Common myeloid progenitor, CD34-positive (primary cell): ENCODE measurements at regions of chr16 and their contacts with region 1.

Region 1: GRCh38 chr16:57675741-57676584 is 7.9 kb downstream of the ADGRG3 start:
- DNase-seq: peak in 2 of 3 donors; percentile 74 to 78
- H3K4me3 ChIP-seq: peak overlapping the region in 1 of 7 experiments; percentile 7
- H3K27ac ChIP-seq: peak overlapping the region in 1 of 2 experiments; percentile 31
- H3K4me1 ChIP-seq: peaks cover 3 to 59% (median 53%) of the 10 kb centered on the region in 4 experiments
- H3K27me3 ChIP-seq: no peaks in the 10 kb centered on the region

Region 2: GRCh38 chr16:57564571-57565270 is 111.2 kb before region 1 on chr16:
- CTCF ChIA-PET with region 1: no interaction called
- POLR2A ChIA-PET with region 1: no interaction called
- DNase-seq: no peak
- H3K4me3 ChIP-seq: no peak overlapping the region
- H3K27ac ChIP-seq: no peak overlapping the region
- H3K4me1 ChIP-seq: no peaks in the 10 kb centered on the region
- H3K27me3 ChIP-seq: no peaks in the 10 kb centered on the region

Region 3: DNA sequence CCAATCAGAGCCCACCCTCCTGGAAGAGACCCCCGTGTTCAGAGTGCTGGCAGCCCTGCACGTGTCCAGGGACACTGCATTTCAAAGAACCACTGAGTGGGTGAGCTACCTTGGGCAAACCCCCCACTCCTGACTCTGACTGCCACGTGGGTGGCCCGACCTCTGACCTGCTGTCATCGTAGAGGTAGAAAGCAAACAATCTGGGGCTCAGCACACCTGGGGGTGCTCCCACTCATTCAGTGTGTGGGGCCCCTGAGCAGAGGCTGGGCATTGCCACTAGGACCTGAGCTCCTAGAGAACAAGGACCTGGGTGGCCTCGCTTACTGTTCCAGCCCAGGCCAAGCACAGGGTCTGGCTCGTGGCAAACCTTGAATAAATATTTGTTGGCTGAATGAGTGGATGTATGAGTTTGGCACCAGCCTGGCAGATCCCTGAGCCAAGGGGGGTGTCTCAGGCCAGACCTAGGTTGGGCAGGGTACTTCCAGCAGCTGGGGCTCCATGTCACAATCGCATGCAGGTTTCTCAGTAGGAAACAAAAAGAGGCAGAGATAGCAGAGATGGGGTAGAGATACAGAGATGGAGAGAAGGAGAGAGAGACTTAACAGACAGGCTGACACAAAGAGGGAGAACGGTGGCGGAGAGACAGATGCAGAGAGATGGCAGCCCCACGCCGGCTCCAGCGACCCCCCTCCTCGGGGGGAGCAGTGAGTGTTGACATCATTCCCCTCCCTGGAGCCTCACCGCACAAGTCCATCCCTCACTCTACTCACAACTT is 13.2 kb after region 1 on chr16:
- CTCF ChIA-PET with region 1: interaction called, 16 read pairs
- POLR2A ChIA-PET with region 1: interaction called, 5 read pairs
- DNase-seq: no peak
- H3K4me3 ChIP-seq: peak overlapping the region in 6 of 7 experiments; percentile 15 to 73 (median 64)
- H3K27ac ChIP-seq: peak overlapping the region; percentile 97 to 99
- H3K4me1 ChIP-seq: peaks cover 17 to 89% (median 80%) of the 10 kb centered on the region in 4 experiments
- H3K27me3 ChIP-seq: no peaks in the 10 kb centered on the region